Mammary epithelial cell (primary cell): ENCODE measurements at regions of chr11 and their contacts with region 1.

Region 1: GRCh38 chr11:1202776-1203504 is 19.9 kb upstream of the MUC5B start:
- DNase-seq: peak; percentile 20
- H3K4me3 ChIP-seq: no peak overlapping the region
- H3K27ac ChIP-seq: no peak overlapping the region
- H3K4me1 ChIP-seq: peaks cover 20% of the 10 kb centered on the region
- H3K27me3 ChIP-seq: peaks cover 14% of the 10 kb centered on the region
- CTCF ChIP-seq: peak; percentile 85 to 95

Region 2: GRCh38 chr11:1281326-1281973 is 78.5 kb after region 1 on chr11:
- CTCF ChIA-PET with region 1: no interaction called
- dilution Hi-C with region 1: loop called (anchors 5 kb)
- in situ Hi-C with region 1: no loop called
- intact Hi-C with region 1: no loop called
- DNase-seq: no peak
- H3K4me3 ChIP-seq: no peak overlapping the region
- H3K27ac ChIP-seq: no peak overlapping the region
- H3K4me1 ChIP-seq: no peaks in the 10 kb centered on the region
- H3K27me3 ChIP-seq: no peaks in the 10 kb centered on the region
- CTCF ChIP-seq: no peak

Region 3: GRCh38 chr11:1422481-1422880 is 219.5 kb after region 1 on chr11:
- CTCF ChIA-PET with region 1: no interaction called
- dilution Hi-C with region 1: loop called (anchors 10 kb)
- in situ Hi-C with region 1: no loop called
- intact Hi-C with region 1: no loop called
- DNase-seq: no peak
- H3K4me3 ChIP-seq: no peak overlapping the region
- H3K27ac ChIP-seq: no peak overlapping the region
- H3K4me1 ChIP-seq: no peaks in the 10 kb centered on the region
- H3K27me3 ChIP-seq: no peaks in the 10 kb centered on the region
- CTCF ChIP-seq: no peak

Region 4: GRCh38 chr11:1515082-1516060 is 312.4 kb after region 1 on chr11:
- CTCF ChIA-PET with region 1: no interaction called
- dilution Hi-C with region 1: no loop called
- in situ Hi-C with region 1: no loop called
- intact Hi-C with region 1: loop called (anchors 1 kb)
- DNase-seq: peak; percentile 30
- H3K4me3 ChIP-seq: no peak overlapping the region
- H3K27ac ChIP-seq: no peak overlapping the region
- H3K4me1 ChIP-seq: peaks cover 4% of the 10 kb centered on the region
- H3K27me3 ChIP-seq: no peaks in the 10 kb centered on the region
- CTCF ChIP-seq: peak; percentile 81 to 92

Region 5: GRCh38 chr11:1572197-1573076 is 369.5 kb after region 1 on chr11 and contains the start of gene DUSP8:
- CTCF ChIA-PET with region 1: no interaction called
- dilution Hi-C with region 1: no loop called
- in situ Hi-C with region 1: no loop called
- intact Hi-C with region 1: loop called (anchors 1 kb)
- DNase-seq: peak; percentile 83
- H3K4me3 ChIP-seq: peak within 1 kb of the TSS in 2 of 3 experiments; percentile 36 to 38
- H3K27ac ChIP-seq: no peak within 1 kb of the TSS
- H3K4me1 ChIP-seq: peaks cover 10% of the 10 kb centered on the region
- H3K27me3 ChIP-seq: peaks cover 8% of the 10 kb centered on the region
- CTCF ChIP-seq: no peak
- total RNA-seq, gene DUSP8: 1.2 to 1.4 TPM